ENCODE measurements at regions of chr4 and their contacts with region 1.

Region 1: GRCh38 chr4:68433582-68433981 is 13.7 kb upstream of the TMPRSS11E start:
- DNase-seq: no peak
- ATAC-seq: no peak
- H3K4me3 ChIP-seq: no peak overlapping the region
- H3K4me3 Mint-ChIP-seq: no peak overlapping the region
- H3K27ac ChIP-seq: no peak overlapping the region
- H3K27ac Mint-ChIP-seq: peak overlapping the region in 1 of 9 donors; percentile 60
- H3K4me1 ChIP-seq: peaks cover 10 to 22% of the 10 kb centered on the region in 2 donors
- H3K4me1 Mint-ChIP-seq: peaks cover 20 to 54% (median 34%) of the 10 kb centered on the region in 7 donors
- H3K27me3 ChIP-seq: no peaks in the 10 kb centered on the region
- H3K27me3 Mint-ChIP-seq: no peaks in the 10 kb centered on the region

Region 2: DNA sequence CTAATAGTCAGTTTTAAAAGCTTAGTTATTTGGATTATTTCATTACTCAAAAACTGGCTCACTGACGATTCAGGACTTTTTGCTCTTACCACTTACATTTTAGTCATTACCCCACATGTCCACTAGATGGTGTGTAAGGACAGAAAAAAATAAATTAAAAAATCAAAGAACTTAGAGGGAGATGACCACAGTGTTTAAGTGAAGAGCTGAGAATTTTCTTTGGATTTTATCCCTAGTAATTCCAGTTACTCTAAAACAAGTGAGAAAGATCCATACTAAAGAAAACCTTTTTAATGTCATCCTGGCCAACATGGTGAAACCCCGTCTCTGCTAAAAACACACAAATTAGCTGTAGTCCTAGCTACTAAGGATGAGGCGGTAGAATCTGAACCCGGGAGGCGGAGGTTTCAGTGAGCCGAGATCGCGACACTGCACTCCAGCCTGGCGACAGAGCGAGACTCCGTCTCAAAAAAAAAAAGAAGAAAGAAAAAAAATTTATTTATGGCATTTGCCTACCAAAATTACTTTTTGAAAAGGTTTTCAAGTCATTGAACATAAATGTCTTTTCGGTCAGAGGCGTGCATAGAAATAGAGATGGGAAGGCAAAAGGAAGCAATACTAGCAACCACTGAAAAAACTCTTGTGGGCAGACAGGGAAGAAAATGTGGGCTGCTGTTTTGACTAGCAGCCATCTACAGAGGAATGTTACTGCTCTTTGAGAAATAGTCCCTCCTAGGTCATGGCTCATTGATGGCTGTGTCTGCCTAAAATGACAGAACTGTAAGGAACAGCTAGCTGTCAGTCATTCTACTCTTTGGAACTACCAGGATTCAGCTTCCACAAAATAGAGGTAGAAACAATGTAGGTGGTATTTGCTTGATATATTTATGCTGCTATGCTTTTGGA is 161.5 kb before region 1 on chr4:
- CTCF ChIA-PET with region 1: interaction called, 3 read pairs
- POLR2A ChIA-PET with region 1: no interaction called
- intact Hi-C with region 1: loop called in 1 of 2 experiments (anchors 5 kb)
- DNase-seq: peak in 6 of 9 donors; percentile 11 to 53 (median 40)
- ATAC-seq: peak; percentile 75
- H3K4me3 ChIP-seq: no peak overlapping the region
- H3K4me3 Mint-ChIP-seq: peak overlapping the region in 9 of 10 donors; percentile 18 to 57 (median 43)
- H3K27ac ChIP-seq: no peak overlapping the region
- H3K27ac Mint-ChIP-seq: no peak overlapping the region
- H3K4me1 ChIP-seq: no peaks in the 10 kb centered on the region
- H3K4me1 Mint-ChIP-seq: peaks cover 0 to 12% (median 0%) of the 10 kb centered on the region in 7 donors
- H3K27me3 ChIP-seq: no peaks in the 10 kb centered on the region
- H3K27me3 Mint-ChIP-seq: peaks cover 0 to 16% (median 12%) of the 10 kb centered on the region in 5 donors

Region 3: DNA sequence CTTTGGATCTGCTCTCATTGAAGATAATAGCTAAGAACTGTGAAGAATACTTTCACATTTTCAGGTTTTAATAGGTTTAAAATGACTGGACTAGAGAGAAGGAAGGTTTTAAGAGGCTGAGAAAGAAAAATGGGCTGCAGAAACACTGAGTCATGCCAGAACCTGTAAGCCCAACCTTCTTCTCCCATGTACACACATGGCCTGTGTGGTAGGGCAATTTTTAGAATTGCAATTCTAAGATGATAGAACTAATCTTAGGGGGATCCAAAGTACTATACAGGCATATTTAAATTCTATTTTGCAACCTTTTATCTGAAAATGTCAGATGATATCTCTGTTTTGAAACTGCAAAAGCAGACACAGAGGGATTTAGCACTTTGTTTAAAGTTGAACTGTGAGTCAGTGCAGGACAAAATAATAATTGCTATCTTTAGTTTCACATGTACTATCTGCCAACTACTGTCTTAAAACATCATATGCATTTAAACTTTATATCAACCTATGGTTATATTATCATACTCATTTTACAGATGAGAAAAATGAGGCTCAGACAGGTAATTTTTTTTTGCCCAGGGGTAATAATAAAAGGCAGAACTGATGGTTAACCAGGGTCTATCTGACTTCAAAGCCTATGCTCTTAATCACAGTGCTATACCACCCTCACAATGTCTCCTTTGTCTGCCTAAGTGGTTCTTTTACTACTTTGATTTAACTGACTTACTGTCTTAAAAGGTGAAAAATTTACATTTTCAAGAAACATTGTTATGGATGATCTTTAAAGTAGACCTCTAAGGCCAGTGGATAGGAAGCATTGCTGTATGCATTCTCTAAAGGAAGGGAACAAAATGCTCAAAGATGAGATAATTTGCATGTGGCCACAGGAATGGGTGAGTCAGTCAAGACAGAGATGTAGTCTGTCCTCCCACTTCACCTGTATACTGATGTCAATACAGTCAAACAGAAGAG is 17.9 kb after region 1 on chr4:
- CTCF ChIA-PET with region 1: no interaction called
- POLR2A ChIA-PET with region 1: no interaction called
- intact Hi-C with region 1: loop called in 1 of 2 experiments (anchors 2 kb)
- DNase-seq: no peak
- ATAC-seq: no peak
- H3K4me3 ChIP-seq: no peak overlapping the region
- H3K4me3 Mint-ChIP-seq: no peak overlapping the region
- H3K27ac ChIP-seq: no peak overlapping the region
- H3K27ac Mint-ChIP-seq: no peak overlapping the region
- H3K4me1 ChIP-seq: no peaks in the 10 kb centered on the region
- H3K4me1 Mint-ChIP-seq: peaks cover 6 to 49% (median 30%) of the 10 kb centered on the region in 7 donors
- H3K27me3 ChIP-seq: no peaks in the 10 kb centered on the region
- H3K27me3 Mint-ChIP-seq: peaks cover 0 to 10% (median 0%) of the 10 kb centered on the region in 5 donors

Region 4: GRCh38 chr4:68498413-68499007 is 64.9 kb after region 1 on chr4:
- CTCF ChIA-PET with region 1: no interaction called
- POLR2A ChIA-PET with region 1: no interaction called
- intact Hi-C with region 1: loop called in 1 of 2 experiments (anchors 2 kb)
- DNase-seq: peak in 8 of 9 donors; percentile 28 to 67 (median 46)
- ATAC-seq: peak; percentile 94
- H3K4me3 ChIP-seq: no peak overlapping the region
- H3K4me3 Mint-ChIP-seq: no peak overlapping the region
- H3K27ac ChIP-seq: no peak overlapping the region
- H3K27ac Mint-ChIP-seq: no peak overlapping the region
- H3K4me1 ChIP-seq: no peaks in the 10 kb centered on the region
- H3K4me1 Mint-ChIP-seq: peaks cover 4 to 22% (median 11%) of the 10 kb centered on the region in 7 donors
- H3K27me3 ChIP-seq: no peaks in the 10 kb centered on the region
- H3K27me3 Mint-ChIP-seq: peaks cover 0 to 4% (median 0%) of the 10 kb centered on the region in 5 donors

Measured in naive thymus-derived CD4-positive, alpha-beta T cell (primary cell).